ENCODE measurements at regions of chr13 and their contacts with region 1.

Region 1: DNA sequence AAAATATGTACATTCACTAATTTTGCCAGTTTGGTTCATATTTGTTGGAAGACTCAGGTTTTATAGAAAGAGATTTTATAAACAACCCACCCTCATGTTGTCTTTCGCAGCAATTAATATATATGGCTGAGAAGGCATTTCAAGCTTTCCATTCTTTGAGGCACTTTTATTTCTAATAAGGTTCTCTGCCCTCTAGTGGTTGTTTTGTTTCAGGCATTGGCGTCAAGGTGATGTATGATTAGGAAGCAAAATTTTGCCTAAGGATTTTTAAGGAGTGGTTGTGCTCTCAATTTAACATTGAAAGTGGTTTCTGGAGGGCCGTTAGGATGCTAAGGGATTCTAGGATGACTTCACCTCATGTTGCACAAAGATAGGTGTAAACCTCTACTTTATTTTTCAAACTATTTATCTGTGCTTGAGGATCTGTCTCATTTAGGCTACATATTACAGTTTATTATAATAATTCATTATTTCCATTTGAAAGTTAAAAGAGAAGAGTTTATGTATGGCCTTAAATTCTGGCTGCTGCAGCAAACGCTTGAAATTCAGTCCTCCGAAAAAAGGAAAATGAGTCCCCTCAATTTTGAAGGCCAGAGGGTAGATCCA is 35.9 kb downstream of the OXGR1 start:
- DNase-seq: peak; percentile 11
- H3K4me3 ChIP-seq: no peak overlapping the region
- H3K27ac ChIP-seq: no peak overlapping the region
- H3K4me1 ChIP-seq: no peaks in the 10 kb centered on the region
- H3K27me3 ChIP-seq: no peaks in the 10 kb centered on the region
- CTCF ChIP-seq: peak; percentile 34 to 68 (median 54)
- POLR2A ChIP-seq: no peak

Region 2: GRCh38 chr13:96020155-96020575 is 938.2 kb before region 1 on chr13:
- intact Hi-C with region 1: loop called (anchors 5 kb)
- DNase-seq: peak; percentile 39
- H3K4me3 ChIP-seq: no peak overlapping the region
- H3K27ac ChIP-seq: no peak overlapping the region
- H3K4me1 ChIP-seq: no peaks in the 10 kb centered on the region
- H3K27me3 ChIP-seq: no peaks in the 10 kb centered on the region
- CTCF ChIP-seq: peak in 3 of 4 experiments; percentile 58 to 69 (median 60)
- POLR2A ChIP-seq: no peak

Region 3: GRCh38 chr13:96984051-96984508 is 25.7 kb after region 1 on chr13:
- intact Hi-C with region 1: no loop called
- DNase-seq: peak; percentile 74
- H3K4me3 ChIP-seq: peak overlapping the region in 1 of 2 donors; percentile 17
- H3K27ac ChIP-seq: peak overlapping the region; percentile 58 to 60
- H3K4me1 ChIP-seq: no peaks in the 10 kb centered on the region
- H3K27me3 ChIP-seq: no peaks in the 10 kb centered on the region
- CTCF ChIP-seq: peak in 3 of 4 experiments; percentile 16 to 43 (median 42)
- POLR2A ChIP-seq: no peak